ENCODE measurements at regions of chr14 and their contacts with region 1.

Region 1: DNA sequence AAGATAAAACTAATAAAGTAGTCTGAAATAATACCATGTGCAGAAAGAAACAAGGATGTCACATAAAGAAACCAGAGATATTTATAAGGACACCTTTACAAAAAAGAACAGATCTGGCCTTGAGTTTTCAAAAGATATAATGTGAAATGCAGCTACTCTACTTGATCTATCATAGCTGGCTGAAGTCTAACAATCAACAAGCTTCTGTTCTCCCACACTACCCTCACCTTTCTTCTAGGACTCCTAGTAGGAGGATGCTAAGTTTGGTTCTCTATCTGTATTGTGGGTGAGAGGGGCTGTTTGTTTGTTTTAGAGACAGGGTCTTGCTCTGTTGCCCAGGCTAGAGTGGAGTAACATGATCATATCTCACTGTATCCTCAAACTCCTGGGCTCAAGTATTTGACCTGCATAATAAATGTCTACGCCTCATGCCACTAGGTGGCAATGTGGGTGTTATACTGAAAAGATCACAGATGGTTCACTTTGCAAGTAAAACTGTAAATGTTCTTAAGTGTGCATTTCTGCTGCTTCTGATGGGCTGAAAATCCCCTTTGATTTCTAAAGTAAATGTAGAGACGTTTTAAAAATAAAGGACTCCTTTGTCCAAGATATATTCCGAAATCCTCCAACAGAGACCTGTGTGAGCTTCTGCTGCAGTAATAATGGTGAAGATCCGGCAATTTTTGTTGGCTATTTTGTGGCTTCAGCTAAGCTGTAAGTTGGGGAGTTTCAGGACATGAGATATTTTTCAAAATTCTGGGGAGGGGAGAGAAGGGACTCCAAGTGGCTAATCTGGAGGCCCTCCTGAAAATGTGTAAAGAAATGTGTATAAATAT is 269.3 kb downstream of the DAD1 start:
- DNase-seq: peak; percentile 69
- ATAC-seq: peak; percentile 70
- H3K4me3 ChIP-seq: no peak overlapping the region
- H3K4me3 Mint-ChIP-seq: no peak overlapping the region
- H3K27ac ChIP-seq: no peak overlapping the region
- H3K27ac Mint-ChIP-seq: no peak overlapping the region
- H3K4me1 ChIP-seq: no peaks in the 10 kb centered on the region
- H3K4me1 Mint-ChIP-seq: peaks cover 3% of the 10 kb centered on the region
- H3K27me3 ChIP-seq: no peaks in the 10 kb centered on the region
- H3K27me3 Mint-ChIP-seq: peaks cover 5% of the 10 kb centered on the region
- CTCF ChIP-seq: peak; percentile 87

Region 2: DNA sequence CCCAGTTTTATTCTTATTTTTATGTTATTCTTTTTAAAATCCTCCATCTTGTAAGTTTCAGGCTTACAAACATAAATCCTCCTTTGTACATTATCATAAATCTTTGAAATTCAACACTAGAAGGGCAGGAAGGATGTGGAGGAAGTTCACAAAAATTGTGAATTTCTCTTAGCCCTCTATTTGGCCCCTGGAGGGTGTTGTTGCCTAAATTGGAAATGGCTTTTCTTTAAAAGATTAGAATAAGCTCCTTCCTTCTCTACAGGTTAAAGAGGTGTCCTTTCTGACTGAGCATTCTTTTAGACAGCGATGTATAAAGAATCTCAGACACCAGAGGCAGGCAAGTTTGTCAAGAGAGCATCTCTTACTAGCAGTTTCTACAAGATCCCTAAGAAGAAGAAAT is 254.4 kb before region 1 on chr14:
- CTCF ChIA-PET with region 1: no interaction called
- POLR2A ChIA-PET with region 1: no interaction called
- intact Hi-C with region 1: no loop called
- DNase-seq: no peak
- ATAC-seq: no peak
- H3K4me3 ChIP-seq: no peak overlapping the region
- H3K4me3 Mint-ChIP-seq: no peak overlapping the region
- H3K27ac ChIP-seq: no peak overlapping the region
- H3K27ac Mint-ChIP-seq: no peak overlapping the region
- H3K4me1 ChIP-seq: peaks cover 7 to 15% of the 10 kb centered on the region in 2 donors
- H3K4me1 Mint-ChIP-seq: peaks cover 8% of the 10 kb centered on the region
- H3K27me3 ChIP-seq: peaks cover 0 to 34% (median 30%) of the 10 kb centered on the region in 4 experiments
- H3K27me3 Mint-ChIP-seq: peaks cover 63% of the 10 kb centered on the region
- CTCF ChIP-seq: no peak

Region 3: GRCh38 chr14:22221508-22221907 is 98.2 kb before region 1 on chr14:
- CTCF ChIA-PET with region 1: interaction called, 14 read pairs
- POLR2A ChIA-PET with region 1: no interaction called
- intact Hi-C with region 1: loop called (anchors 5 kb)
- DNase-seq: peak; percentile 48
- ATAC-seq: no peak
- H3K4me3 ChIP-seq: no peak overlapping the region
- H3K4me3 Mint-ChIP-seq: no peak overlapping the region
- H3K27ac ChIP-seq: no peak overlapping the region
- H3K27ac Mint-ChIP-seq: no peak overlapping the region
- H3K4me1 ChIP-seq: peaks cover 13 to 15% of the 10 kb centered on the region in 2 donors
- H3K4me1 Mint-ChIP-seq: peaks cover 25% of the 10 kb centered on the region
- H3K27me3 ChIP-seq: peaks cover 0 to 12% (median 7%) of the 10 kb centered on the region in 4 experiments
- H3K27me3 Mint-ChIP-seq: peaks cover 24% of the 10 kb centered on the region
- CTCF ChIP-seq: peak; percentile 66

Region 4: GRCh38 chr14:22303589-22304195 is 16.1 kb before region 1 on chr14:
- CTCF ChIA-PET with region 1: interaction called, 13 read pairs
- POLR2A ChIA-PET with region 1: no interaction called
- intact Hi-C with region 1: no loop called
- DNase-seq: peak; percentile 21
- ATAC-seq: no peak
- H3K4me3 ChIP-seq: no peak overlapping the region
- H3K4me3 Mint-ChIP-seq: no peak overlapping the region
- H3K27ac ChIP-seq: no peak overlapping the region
- H3K27ac Mint-ChIP-seq: no peak overlapping the region
- H3K4me1 ChIP-seq: no peaks in the 10 kb centered on the region
- H3K4me1 Mint-ChIP-seq: no peaks in the 10 kb centered on the region
- H3K27me3 ChIP-seq: peaks cover 0 to 11% (median 8%) of the 10 kb centered on the region in 4 experiments
- H3K27me3 Mint-ChIP-seq: peaks cover 25% of the 10 kb centered on the region
- CTCF ChIP-seq: peak; percentile 85

Region 5: GRCh38 chr14:22338917-22339715 is 19.4 kb after region 1 on chr14:
- CTCF ChIA-PET with region 1: interaction called, 12 read pairs
- POLR2A ChIA-PET with region 1: no interaction called
- intact Hi-C with region 1: no loop called
- DNase-seq: no peak
- ATAC-seq: no peak
- H3K4me3 ChIP-seq: no peak overlapping the region
- H3K4me3 Mint-ChIP-seq: no peak overlapping the region
- H3K27ac ChIP-seq: no peak overlapping the region
- H3K27ac Mint-ChIP-seq: no peak overlapping the region
- H3K4me1 ChIP-seq: no peaks in the 10 kb centered on the region
- H3K4me1 Mint-ChIP-seq: peaks cover 3% of the 10 kb centered on the region
- H3K27me3 ChIP-seq: peaks cover 0 to 3% (median 0%) of the 10 kb centered on the region in 4 experiments
- H3K27me3 Mint-ChIP-seq: peaks cover 8% of the 10 kb centered on the region
- CTCF ChIP-seq: no peak

Region 6: GRCh38 chr14:22375321-22375930 is 55.7 kb after region 1 on chr14:
- CTCF ChIA-PET with region 1: interaction called, 71 read pairs
- POLR2A ChIA-PET with region 1: no interaction called
- intact Hi-C with region 1: loop called (anchors 1 kb)
- DNase-seq: peak; percentile 66
- ATAC-seq: peak; percentile 47
- H3K4me3 ChIP-seq: no peak overlapping the region
- H3K4me3 Mint-ChIP-seq: no peak overlapping the region
- H3K27ac ChIP-seq: no peak overlapping the region
- H3K27ac Mint-ChIP-seq: no peak overlapping the region
- H3K4me1 ChIP-seq: peaks cover 0 to under 1% of the 10 kb centered on the region in 2 donors
- H3K4me1 Mint-ChIP-seq: no peaks in the 10 kb centered on the region
- H3K27me3 ChIP-seq: no peaks in the 10 kb centered on the region
- H3K27me3 Mint-ChIP-seq: no peaks in the 10 kb centered on the region
- CTCF ChIP-seq: peak; percentile 79

Region 7: DNA sequence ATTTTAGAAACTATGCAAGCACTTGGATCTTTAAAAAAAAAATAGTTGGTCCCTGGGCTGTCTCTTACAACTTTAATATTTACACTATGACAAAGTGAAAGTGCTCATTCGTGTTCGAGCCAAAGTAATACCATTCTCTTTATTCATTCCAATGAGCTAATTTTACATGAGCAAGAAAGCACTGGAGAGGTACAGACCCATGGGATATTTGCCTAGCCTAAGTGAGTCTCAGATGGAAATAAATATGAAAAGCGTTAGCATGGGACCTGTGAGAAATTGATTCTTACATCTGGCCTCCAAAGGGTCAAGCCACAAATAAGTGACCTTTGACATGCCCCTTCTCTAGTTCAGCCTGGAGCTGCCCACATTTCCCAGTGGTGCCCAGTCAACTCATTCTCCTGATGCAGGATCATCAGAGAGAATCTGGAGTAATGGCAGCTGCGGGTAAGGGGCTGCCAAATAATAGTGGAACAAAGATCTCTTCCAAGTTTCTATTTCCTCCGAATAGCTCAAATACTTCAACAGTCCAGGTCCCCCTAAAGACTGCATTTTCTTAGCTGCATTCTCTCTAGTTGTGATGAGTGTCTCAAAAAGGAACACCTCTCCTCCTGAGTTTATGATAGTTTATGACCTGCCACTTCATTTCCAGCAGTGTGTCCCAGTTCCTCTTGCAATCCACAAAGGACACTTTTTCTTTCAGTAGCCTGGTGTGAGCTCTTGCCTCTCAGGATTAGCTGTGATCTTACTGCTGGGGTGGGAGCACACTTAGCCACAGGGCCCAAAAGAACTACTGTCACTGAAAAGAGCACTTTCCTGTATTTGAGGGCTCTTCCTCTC is 61.0 kb after region 1 on chr14:
- CTCF ChIA-PET with region 1: interaction called, 71 read pairs
- POLR2A ChIA-PET with region 1: no interaction called
- intact Hi-C with region 1: loop called (anchors 1 kb)
- DNase-seq: peak; percentile 13
- ATAC-seq: no peak
- H3K4me3 ChIP-seq: no peak overlapping the region
- H3K4me3 Mint-ChIP-seq: peak overlapping the region; percentile 23
- H3K27ac ChIP-seq: peak overlapping the region in 1 of 2 donors; percentile 4
- H3K27ac Mint-ChIP-seq: peak overlapping the region; percentile 47
- H3K4me1 ChIP-seq: peaks cover 44 to 48% of the 10 kb centered on the region in 2 donors
- H3K4me1 Mint-ChIP-seq: peaks cover 50% of the 10 kb centered on the region
- H3K27me3 ChIP-seq: no peaks in the 10 kb centered on the region
- H3K27me3 Mint-ChIP-seq: no peaks in the 10 kb centered on the region
- CTCF ChIP-seq: no peak

Region 8: GRCh38 chr14:22472935-22473854 is 153.5 kb after region 1 on chr14:
- CTCF ChIA-PET with region 1: interaction called, 29 read pairs
- POLR2A ChIA-PET with region 1: no interaction called
- intact Hi-C with region 1: loop called (anchors 1 kb)
- DNase-seq: peak; percentile 82
- ATAC-seq: peak; percentile 56
- H3K4me3 ChIP-seq: no peak overlapping the region
- H3K4me3 Mint-ChIP-seq: no peak overlapping the region
- H3K27ac ChIP-seq: no peak overlapping the region
- H3K27ac Mint-ChIP-seq: peak overlapping the region; percentile 75
- H3K4me1 ChIP-seq: peaks cover 60 to 74% of the 10 kb centered on the region in 2 donors
- H3K4me1 Mint-ChIP-seq: peaks cover 89% of the 10 kb centered on the region
- H3K27me3 ChIP-seq: no peaks in the 10 kb centered on the region
- H3K27me3 Mint-ChIP-seq: no peaks in the 10 kb centered on the region
- CTCF ChIP-seq: peak; percentile 77